ENCODE measurements at regions of chr5 and their contacts with region 1.

Region 1: GRCh38 chr5:148730943-148731861 is 76.9 kb upstream of the HTR4 start:
- DNase-seq: peak; percentile 77
- ATAC-seq: peak; percentile 90
- H3K4me3 ChIP-seq: peak overlapping the region; percentile 9 to 39; a peak in 3 of 4 replicates
- H3K27ac ChIP-seq: no peak overlapping the region
- H3K4me1 ChIP-seq: peaks cover 6% of the 10 kb centered on the region
- H3K27me3 ChIP-seq: peaks cover 10% of the 10 kb centered on the region; the same call in 1 of the 2 replicates
- CTCF ChIP-seq: peak; percentile 92

Region 2: DNA sequence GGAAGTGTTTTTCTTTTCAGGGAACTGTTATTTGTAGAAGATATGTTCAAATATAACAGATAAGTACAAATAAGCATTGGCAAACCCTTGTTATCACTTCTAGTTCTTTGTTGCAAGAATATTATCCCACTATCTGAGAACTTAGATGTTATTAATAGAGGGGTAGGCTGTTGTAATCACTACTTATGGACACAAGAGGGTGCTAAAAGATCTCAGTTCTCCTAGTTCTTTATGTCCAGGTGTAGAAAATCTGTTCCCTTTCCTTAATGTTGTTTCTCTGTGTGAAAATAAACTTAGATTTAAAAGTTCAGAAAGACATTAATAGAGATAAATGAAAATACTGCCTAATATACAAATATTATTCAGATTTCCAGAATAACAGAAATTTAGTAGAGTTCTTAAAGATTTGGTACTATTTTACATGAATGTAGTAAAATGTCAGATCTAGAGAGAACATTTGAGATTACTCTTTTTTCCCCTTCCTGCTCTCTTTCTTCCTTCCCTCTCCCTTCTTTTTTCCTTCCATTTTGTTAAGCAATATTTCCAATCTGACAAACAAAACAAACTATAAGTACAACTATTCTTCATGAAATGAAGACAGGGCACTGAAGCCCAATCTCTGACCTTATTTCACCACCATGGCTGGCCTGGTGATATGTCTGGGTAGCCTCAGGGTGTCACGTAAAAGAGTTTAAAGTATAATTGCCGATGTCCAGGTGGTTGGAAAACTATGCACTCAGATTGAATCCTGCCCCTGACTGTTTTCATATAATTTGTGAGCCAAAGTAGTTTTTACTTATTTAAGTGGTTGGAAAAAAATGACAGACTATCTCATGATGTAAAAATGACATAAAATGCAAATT is 781.3 kb before region 1 on chr5:
- CTCF ChIA-PET with region 1: no interaction called
- POLR2A ChIA-PET with region 1: no interaction called
- in situ Hi-C with region 1: no loop called
- intact Hi-C with region 1: loop called (anchors 5 kb)
- DNase-seq: peak; percentile 25
- ATAC-seq: peak; percentile 84
- H3K4me3 ChIP-seq: no peak overlapping the region
- H3K27ac ChIP-seq: no peak overlapping the region
- H3K4me1 ChIP-seq: no peaks in the 10 kb centered on the region
- H3K27me3 ChIP-seq: no peaks in the 10 kb centered on the region
- CTCF ChIP-seq: peak; percentile 65; the same call in 1 of the 2 replicates

Region 3: DNA sequence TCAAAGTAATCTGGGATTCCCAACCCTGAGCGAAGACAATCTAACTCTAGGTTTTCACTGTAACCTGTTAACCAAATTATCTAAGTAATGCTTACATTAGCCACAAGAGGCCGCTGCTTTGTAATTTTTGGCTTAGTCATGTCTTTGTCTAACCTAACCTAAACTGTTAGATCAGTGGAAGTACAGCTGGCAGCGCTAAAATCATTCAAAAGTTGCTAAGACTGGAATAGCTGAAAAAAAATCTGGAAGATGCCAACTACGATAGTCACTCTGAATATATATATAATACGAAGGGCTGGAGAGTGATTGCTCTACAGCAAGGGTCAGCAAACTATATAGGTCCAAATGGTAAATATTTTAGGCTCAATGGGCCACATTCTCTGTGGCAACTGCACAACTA is 287.2 kb before region 1 on chr5:
- CTCF ChIA-PET with region 1: interaction called, 24 read pairs
- POLR2A ChIA-PET with region 1: no interaction called
- in situ Hi-C with region 1: no loop called
- intact Hi-C with region 1: loop called (anchors 1 kb)
- DNase-seq: peak; percentile 57
- ATAC-seq: peak; percentile 89
- H3K4me3 ChIP-seq: no peak overlapping the region
- H3K27ac ChIP-seq: no peak overlapping the region
- H3K4me1 ChIP-seq: no peaks in the 10 kb centered on the region
- H3K27me3 ChIP-seq: no peaks in the 10 kb centered on the region
- CTCF ChIP-seq: peak; percentile 74; the same call in 1 of the 2 replicates

Region 4: GRCh38 chr5:148465381-148466235 is 265.6 kb before region 1 on chr5:
- CTCF ChIA-PET with region 1: no interaction called
- POLR2A ChIA-PET with region 1: no interaction called
- in situ Hi-C with region 1: no loop called
- intact Hi-C with region 1: no loop called
- DNase-seq: no peak
- ATAC-seq: no peak
- H3K4me3 ChIP-seq: no peak overlapping the region
- H3K27ac ChIP-seq: no peak overlapping the region
- H3K4me1 ChIP-seq: no peaks in the 10 kb centered on the region
- H3K27me3 ChIP-seq: no peaks in the 10 kb centered on the region; the same call in 1 of the 2 replicates
- CTCF ChIP-seq: no peak

Region 5: DNA sequence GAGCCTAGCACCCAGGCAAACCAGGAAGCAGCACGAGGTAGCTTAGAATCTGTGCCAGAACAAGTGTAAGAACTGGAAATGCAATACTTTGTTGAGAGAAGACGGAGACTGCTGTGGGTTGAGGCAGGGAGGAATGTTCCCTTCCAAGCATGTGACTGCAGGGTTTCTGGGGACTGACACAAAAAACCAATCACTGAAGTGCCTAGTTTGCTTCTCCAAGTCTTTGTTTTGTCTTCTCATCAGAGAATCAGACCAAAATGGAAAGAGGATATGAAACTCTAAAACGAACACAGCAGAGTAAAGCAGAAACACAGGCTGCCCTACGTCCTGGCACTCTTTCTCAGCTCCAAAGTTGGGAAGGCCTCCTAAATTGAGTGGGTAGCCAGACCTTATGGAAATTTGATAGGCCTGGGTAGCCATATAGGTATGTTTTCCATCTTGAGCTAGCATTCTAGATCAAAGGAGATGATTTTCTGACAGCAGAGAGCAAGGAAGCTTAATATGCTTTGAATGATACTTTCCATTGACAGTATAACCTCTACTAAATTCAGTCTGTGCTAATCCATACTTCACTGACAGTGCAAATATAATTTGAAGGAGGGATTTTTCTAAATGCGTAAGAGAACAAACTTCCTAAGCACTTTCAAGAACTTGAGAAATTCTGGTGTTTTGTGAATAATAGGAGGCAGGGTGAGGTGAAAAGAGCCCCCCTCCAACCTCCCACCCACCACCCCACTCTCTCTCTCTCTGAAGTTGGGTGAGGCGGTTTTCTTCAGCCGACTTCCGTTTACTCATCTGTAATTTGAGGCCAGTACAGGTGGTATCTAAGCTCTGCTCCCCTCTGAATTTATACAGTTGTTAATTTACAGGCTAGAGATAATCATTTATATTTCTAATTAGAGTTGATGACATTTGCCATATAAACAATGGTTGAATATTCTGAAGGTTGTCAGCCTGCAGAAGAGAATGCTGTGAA is 100.7 kb after region 1 on chr5:
- CTCF ChIA-PET with region 1: no interaction called
- POLR2A ChIA-PET with region 1: no interaction called
- in situ Hi-C with region 1: no loop called
- intact Hi-C with region 1: no loop called
- DNase-seq: no peak
- ATAC-seq: no peak
- H3K4me3 ChIP-seq: no peak overlapping the region
- H3K27ac ChIP-seq: no peak overlapping the region
- H3K4me1 ChIP-seq: peaks cover 9% of the 10 kb centered on the region; the same call in 1 of the 2 replicates
- H3K27me3 ChIP-seq: no peaks in the 10 kb centered on the region
- CTCF ChIP-seq: no peak

Region 6: GRCh38 chr5:149114403-149115312 is 383.5 kb after region 1 on chr5:
- CTCF ChIA-PET with region 1: interaction called, 18 read pairs
- POLR2A ChIA-PET with region 1: no interaction called
- in situ Hi-C with region 1: no loop called
- intact Hi-C with region 1: loop called (anchors 1 kb)
- DNase-seq: peak; percentile 78
- ATAC-seq: peak; percentile 99
- H3K4me3 ChIP-seq: no peak overlapping the region
- H3K27ac ChIP-seq: no peak overlapping the region
- H3K4me1 ChIP-seq: no peaks in the 10 kb centered on the region
- H3K27me3 ChIP-seq: peaks cover under 1% of the 10 kb centered on the region; the same call in 1 of the 2 replicates
- CTCF ChIP-seq: peak; percentile 87

Region 7: DNA sequence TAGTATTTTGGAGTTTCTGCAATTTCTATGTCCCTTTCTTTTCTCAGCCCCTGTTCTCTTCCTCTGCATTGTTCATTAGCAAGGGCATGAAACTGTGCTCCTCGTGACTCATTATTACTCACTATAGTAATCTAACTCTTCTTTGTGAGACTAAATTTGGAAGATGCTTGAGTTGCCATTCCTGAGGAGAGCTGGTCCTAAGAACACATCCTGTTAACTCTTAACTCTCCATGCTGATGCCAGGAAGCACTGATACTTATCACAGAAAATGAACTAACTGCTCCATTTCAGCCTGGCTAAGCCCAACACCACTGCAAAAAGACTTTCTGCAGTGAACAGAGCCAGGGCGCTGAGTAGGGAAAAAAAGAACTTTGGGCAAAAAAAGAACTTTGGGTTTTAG is 830.6 kb after region 1 on chr5:
- CTCF ChIA-PET with region 1: interaction called, 9 read pairs
- POLR2A ChIA-PET with region 1: no interaction called
- in situ Hi-C with region 1: no loop called
- intact Hi-C with region 1: loop called (anchors 10 kb)
- DNase-seq: peak; percentile 94
- ATAC-seq: peak; percentile 90
- H3K4me3 ChIP-seq: peak overlapping the region; percentile 11 to 47
- H3K27ac ChIP-seq: peak overlapping the region; percentile 96
- H3K4me1 ChIP-seq: peaks cover 29% of the 10 kb centered on the region
- H3K27me3 ChIP-seq: no peaks in the 10 kb centered on the region
- CTCF ChIP-seq: no peak

Region 8: GRCh38 chr5:149824846-149825245 is 1093.6 kb after region 1 on chr5:
- CTCF ChIA-PET with region 1: no interaction called
- POLR2A ChIA-PET with region 1: no interaction called
- in situ Hi-C with region 1: no loop called
- intact Hi-C with region 1: no loop called
- DNase-seq: no peak
- ATAC-seq: no peak
- H3K4me3 ChIP-seq: no peak overlapping the region
- H3K27ac ChIP-seq: no peak overlapping the region
- H3K4me1 ChIP-seq: no peaks in the 10 kb centered on the region
- H3K27me3 ChIP-seq: no peaks in the 10 kb centered on the region
- CTCF ChIP-seq: no peak